Right cardiac atrium (tissue), 5 donors: ENCODE measurements at regions of chr14 and their contacts with region 1.

Region 1: GRCh38 chr14:24411443-24412389 is 12.9 kb downstream of the NYNRIN start:
- DNase-seq: peak in 1 of 3 donors; percentile 42
- ATAC-seq: peak; percentile 25 to 51
- H3K4me3 ChIP-seq: no peak overlapping the region
- H3K27ac ChIP-seq: no peak overlapping the region
- H3K4me1 ChIP-seq: peaks cover 3% of the 10 kb centered on the region
- H3K27me3 ChIP-seq: no peaks in the 10 kb centered on the region

Region 2: DNA sequence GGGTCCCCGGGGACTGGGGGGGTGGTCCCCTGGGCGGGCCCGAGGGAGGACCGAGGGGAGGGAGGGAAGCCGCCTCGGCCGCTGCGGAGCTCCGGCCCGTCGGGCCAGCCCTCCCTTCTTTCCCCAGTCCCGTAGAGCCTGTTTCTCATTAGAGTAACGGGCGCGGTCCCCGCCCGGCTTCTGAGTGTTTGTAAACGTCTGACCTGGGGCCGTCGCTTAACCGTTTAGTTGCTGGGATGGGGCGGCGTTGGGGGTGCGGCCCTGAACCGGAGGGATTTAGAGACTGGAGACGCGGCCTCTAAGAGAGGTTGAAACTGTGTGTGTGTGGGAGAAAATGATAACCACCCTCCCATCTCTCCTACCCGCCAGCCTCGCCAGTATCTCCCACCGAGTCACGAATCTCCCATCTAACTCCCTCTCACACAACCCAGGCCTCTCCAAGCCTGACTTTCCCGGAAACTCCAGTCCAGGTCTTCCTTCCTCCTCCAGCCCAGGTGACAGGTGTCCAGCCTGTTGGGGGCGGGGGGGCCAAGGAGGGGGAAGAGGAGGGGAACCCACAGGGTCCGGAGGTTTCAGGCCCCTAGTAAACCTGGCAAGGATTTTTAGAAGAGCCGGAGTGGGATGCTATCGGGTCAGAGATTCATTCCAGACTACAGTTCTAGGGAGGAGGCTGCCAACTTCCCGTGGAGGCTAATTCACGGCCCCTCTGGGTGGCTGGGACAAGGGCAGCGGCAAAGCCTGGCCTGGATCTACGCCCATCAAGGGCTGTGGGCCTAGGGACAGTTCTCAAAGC is 44.8 kb before region 1 on chr14:
- intact Hi-C with region 1: loop called in 1 of 4 experiments (anchors 5 kb)
- DNase-seq: peak; percentile 93 to 97 (median 96)
- ATAC-seq: peak; percentile 87 to 88
- H3K4me3 ChIP-seq: peak overlapping the region; percentile 83
- H3K27ac ChIP-seq: peak overlapping the region; percentile 95
- H3K4me1 ChIP-seq: no peaks in the 10 kb centered on the region
- H3K27me3 ChIP-seq: no peaks in the 10 kb centered on the region